ENCODE measurements at regions of chr6 and their contacts with region 1.

Region 1: DNA sequence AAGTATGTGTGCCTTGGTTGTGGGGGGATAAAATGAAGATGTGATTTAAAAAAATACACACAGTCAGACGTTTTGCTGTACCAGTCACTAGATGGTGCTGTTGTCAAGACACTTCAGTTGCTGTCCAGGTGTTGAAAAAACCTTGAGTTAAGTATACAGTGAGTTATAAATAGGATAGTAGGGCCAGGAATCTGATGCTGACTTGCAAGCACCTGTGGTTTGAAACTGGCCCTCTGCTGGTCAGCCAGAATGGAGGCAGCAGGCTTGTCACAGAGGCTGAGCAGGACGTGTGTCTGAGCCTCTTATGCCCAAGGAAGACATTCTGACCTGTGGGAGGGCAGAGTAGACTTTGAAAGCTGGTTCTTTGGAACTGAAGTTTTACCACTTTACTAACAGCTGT is 27.8 kb downstream of the RNF8 start:
- DNase-seq: peak; percentile 36
- ATAC-seq: peak; percentile 64
- H3K4me3 Mint-ChIP-seq: no peak overlapping the region
- H3K27ac Mint-ChIP-seq: no peak overlapping the region
- H3K4me1 Mint-ChIP-seq: peaks cover 2% of the 10 kb centered on the region
- H3K27me3 Mint-ChIP-seq: no peaks in the 10 kb centered on the region
- CTCF ChIP-seq: peak; percentile 68

Region 2: DNA sequence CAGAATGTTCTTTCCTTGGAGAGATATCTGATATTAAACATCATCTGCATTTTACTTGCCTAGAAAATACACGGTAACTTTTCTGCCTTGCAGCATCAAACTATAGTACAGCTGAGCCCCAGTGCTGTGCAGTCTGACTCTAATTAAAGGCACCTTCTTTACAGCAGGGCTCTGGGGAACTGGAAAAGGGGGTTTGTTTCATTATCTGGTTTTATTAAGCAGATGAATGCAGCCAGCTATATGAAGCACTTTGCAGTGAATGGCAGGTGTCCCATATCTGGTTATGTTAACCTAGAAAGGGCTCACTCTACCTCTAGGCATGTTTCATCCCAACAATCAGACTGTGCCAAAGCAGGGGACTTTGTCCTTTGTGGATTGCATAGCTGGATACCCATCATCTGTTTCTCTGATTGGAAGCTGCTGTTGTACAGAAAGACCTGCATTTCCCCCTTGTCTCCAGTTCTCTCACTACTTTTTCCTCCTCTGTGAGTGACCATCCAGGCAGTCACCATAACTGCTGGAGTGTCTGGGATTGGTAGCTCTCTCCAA is 11.9 kb after region 1 on chr6:
- CTCF ChIA-PET with region 1: interaction called, 10 read pairs
- POLR2A ChIA-PET with region 1: no interaction called
- intact Hi-C with region 1: no loop called
- DNase-seq: no peak
- ATAC-seq: no peak
- H3K4me3 Mint-ChIP-seq: no peak overlapping the region
- H3K27ac Mint-ChIP-seq: no peak overlapping the region
- H3K4me1 Mint-ChIP-seq: no peaks in the 10 kb centered on the region
- H3K27me3 Mint-ChIP-seq: no peaks in the 10 kb centered on the region
- CTCF ChIP-seq: no peak

Region 3: GRCh38 chr6:37432916-37433656 is 51.5 kb after region 1 on chr6 and contains the start of gene CMTR1:
- CTCF ChIA-PET with region 1: interaction called, 4 read pairs
- POLR2A ChIA-PET with region 1: interaction called, 10 read pairs
- intact Hi-C with region 1: no loop called
- DNase-seq: peak; percentile 96
- ATAC-seq: peak; percentile 91
- H3K4me3 Mint-ChIP-seq: peak within 1 kb of the TSS; percentile 92
- H3K27ac Mint-ChIP-seq: peak within 1 kb of the TSS; percentile 96
- H3K4me1 Mint-ChIP-seq: peaks cover 38% of the 10 kb centered on the region
- H3K27me3 Mint-ChIP-seq: peaks cover 3% of the 10 kb centered on the region
- CTCF ChIP-seq: no peak
- total RNA-seq, gene CMTR1: 49.9 to 50.6 TPM

Measured in activated CD8-positive, alpha-beta T cell treated with anti-CD3 and anti-CD28 coated beads for 36 hours (primary cell).